SK-N-SH (cell line): ENCODE measurements at regions of chr1 and their contacts with region 1.

Region 1: DNA sequence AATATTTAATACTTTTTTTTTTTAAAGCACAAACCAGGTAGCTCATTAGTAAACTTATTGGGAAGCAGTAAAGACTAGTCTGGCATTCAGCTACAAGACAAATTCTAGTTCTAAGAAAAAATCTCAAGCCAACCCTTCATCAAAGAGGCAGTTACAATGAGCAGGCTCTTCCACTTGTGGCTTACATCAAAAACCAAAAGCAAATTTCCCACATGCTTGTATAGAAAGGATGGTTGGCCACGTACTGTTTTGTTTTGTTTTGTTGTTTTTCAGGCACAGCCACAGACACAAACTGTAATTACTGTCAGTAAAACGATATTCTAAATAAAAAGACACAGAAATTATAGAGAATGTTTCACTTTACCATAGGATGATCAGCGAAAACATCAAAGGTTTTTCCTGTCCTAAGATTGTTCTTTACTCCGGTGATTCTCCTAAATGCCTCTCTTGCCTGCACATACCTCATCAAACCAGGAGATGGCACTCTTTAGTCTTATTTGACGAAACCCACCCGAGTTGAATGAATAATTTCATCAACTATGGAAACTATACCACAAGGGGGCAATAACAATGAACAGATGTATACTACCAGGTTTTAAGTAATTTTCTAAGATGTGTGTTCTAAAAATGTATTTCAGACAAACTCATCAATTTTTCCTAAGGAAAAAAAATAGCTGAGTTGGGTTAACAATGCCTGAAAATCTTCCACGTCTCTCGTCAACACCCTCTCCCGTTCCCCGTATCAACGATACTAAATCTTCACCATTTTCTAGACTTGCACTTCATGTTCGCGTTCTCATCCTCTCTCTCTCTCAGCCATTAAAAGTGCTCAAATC is 26.9 kb downstream of the RPL5 start:
- DNase-seq: peak; percentile 71
- H3K4me3 ChIP-seq: no peak overlapping the region; a peak in 1 of 4 replicates
- H3K27ac ChIP-seq: no peak overlapping the region
- H3K4me1 ChIP-seq: peaks cover 0 to 6% of the 10 kb centered on the region in 2 experiments; a peak in 1 of 4 replicates
- H3K27me3 ChIP-seq: no peaks in the 10 kb centered on the region
- CTCF ChIP-seq: peak; percentile 99
- EP300 ChIP-seq: no peak
- RAD21 ChIP-seq: peak; percentile 99

Region 2: GRCh38 chr1:92843429-92844352 is 15.1 kb before region 1 on chr1:
- CTCF ChIA-PET with region 1: interaction called, 26 read pairs
- POLR2A ChIA-PET with region 1: no interaction called
- DNase-seq: no peak
- H3K4me3 ChIP-seq: no peak overlapping the region
- H3K27ac ChIP-seq: no peak overlapping the region
- H3K4me1 ChIP-seq: peaks cover 0 to 3% of the 10 kb centered on the region in 2 experiments; a peak in 1 of 4 replicates
- H3K27me3 ChIP-seq: no peaks in the 10 kb centered on the region
- CTCF ChIP-seq: no peak
- EP300 ChIP-seq: no peak
- RAD21 ChIP-seq: no peak

Region 3: DNA sequence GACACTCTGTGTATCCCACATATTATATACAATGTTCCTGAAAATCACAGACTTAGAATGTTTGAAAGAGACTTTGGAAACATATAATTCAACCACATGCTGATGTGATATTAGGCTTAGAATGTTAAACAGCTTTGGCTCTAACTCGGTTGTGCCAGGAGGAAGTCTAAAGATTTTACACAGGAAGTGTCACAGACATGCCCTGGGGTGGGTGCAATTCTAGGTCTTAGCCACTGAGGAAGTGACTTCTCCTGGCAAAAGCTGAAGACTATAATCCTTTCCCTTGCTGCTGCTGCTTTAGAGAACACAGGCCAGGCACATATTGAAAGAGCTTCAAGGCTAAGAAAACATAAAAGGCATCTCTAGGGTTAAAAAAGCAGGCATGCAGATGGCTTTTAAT is 24.0 kb after region 1 on chr1:
- CTCF ChIA-PET with region 1: interaction called, 46 read pairs
- POLR2A ChIA-PET with region 1: no interaction called
- DNase-seq: peak; percentile 2
- H3K4me3 ChIP-seq: no peak overlapping the region
- H3K27ac ChIP-seq: peak overlapping the region in 1 of 2 experiments; percentile 28; a peak in 1 of 4 replicates
- H3K4me1 ChIP-seq: peaks cover 0 to 15% of the 10 kb centered on the region in 2 experiments; a peak in 3 of 4 replicates
- H3K27me3 ChIP-seq: no peaks in the 10 kb centered on the region
- CTCF ChIP-seq: no peak
- EP300 ChIP-seq: no peak
- RAD21 ChIP-seq: no peak

Region 4: GRCh38 chr1:92944901-92945747 is 86.3 kb after region 1 on chr1:
- CTCF ChIA-PET with region 1: interaction called, 17 read pairs
- POLR2A ChIA-PET with region 1: no interaction called
- DNase-seq: no peak
- H3K4me3 ChIP-seq: no peak overlapping the region
- H3K27ac ChIP-seq: no peak overlapping the region
- H3K4me1 ChIP-seq: peaks cover 4 to 5% of the 10 kb centered on the region in 2 experiments; a peak in 3 of 4 replicates
- H3K27me3 ChIP-seq: no peaks in the 10 kb centered on the region
- CTCF ChIP-seq: no peak
- EP300 ChIP-seq: no peak
- RAD21 ChIP-seq: no peak

Region 5: DNA sequence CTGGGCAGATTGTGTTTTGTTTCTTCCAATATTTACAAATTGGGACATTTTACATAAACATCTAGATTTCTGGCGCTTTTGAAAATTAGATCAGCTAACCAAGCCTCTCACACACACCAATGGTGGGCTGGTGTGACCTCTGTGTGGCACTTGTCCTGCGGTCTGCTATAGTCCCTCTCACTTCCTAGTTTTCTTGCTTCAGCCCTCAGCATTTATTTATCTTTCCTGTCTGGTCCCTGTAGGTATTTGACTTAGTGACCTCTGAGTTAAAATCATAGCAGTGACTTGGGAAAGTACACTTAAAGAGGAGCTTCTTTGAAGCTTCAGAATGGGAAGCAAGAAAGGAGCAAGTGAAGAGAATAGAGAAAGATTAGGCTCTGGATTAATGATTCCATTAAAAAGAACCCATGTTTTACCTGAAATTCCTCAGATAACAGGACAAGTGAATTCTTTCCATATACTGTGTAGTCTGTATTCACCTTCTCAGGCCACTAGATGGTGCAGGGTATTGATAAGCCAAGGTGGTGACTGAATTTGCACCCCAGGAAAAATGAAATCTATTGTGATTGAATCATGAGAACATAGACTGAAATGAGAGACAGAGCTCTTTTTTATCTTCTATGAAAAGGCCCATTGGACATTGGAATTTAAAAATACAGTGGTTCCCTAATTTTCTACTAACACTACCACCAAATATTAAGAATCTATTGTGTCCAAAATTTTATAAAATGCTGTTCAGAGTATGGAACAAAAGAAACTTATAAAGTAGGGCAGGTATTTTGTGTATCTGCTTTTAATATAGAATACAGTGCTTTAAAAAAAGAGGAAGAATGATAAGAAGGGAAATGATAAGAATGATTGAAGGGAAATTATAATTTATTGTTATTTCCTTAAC is 109.6 kb after region 1 on chr1:
- CTCF ChIA-PET with region 1: interaction called, 163 read pairs
- POLR2A ChIA-PET with region 1: no interaction called
- DNase-seq: peak; percentile 38
- H3K4me3 ChIP-seq: no peak overlapping the region; a peak in 1 of 4 replicates
- H3K27ac ChIP-seq: no peak overlapping the region
- H3K4me1 ChIP-seq: no peaks in the 10 kb centered on the region; a peak in 1 of 4 replicates
- H3K27me3 ChIP-seq: no peaks in the 10 kb centered on the region; the same call in 1 of the 2 replicates
- CTCF ChIP-seq: peak; percentile 59
- EP300 ChIP-seq: no peak
- RAD21 ChIP-seq: peak; percentile 56

Region 6: DNA sequence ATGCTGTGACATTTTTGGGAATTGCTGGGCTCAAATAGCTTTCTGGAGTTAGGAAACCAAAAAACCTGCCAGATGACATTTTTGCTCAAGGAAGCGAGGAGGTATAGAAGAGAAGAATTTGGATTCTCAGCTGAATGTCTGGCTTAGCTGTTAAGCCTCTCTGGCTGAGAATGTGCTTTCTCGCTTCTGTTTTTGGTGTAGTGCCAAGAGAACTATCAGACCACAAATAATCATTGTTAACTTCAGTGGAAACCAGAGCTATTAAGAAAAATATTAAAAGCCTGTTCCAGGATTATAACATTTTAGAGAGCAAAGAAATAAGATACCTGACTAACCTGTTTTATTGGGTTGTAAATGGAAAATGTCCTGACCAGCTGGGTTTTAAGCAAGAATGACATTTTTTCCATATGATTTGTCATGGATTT is 142.0 kb after region 1 on chr1:
- CTCF ChIA-PET with region 1: interaction called, 31 read pairs
- POLR2A ChIA-PET with region 1: interaction called, 3 read pairs
- DNase-seq: no peak
- H3K4me3 ChIP-seq: no peak overlapping the region
- H3K27ac ChIP-seq: no peak overlapping the region
- H3K4me1 ChIP-seq: peaks cover 0 to 4% of the 10 kb centered on the region in 2 experiments; a peak in 3 of 4 replicates
- H3K27me3 ChIP-seq: no peaks in the 10 kb centered on the region
- CTCF ChIP-seq: no peak
- EP300 ChIP-seq: no peak
- RAD21 ChIP-seq: no peak